GM12878 (cell line): ENCODE measurements at regions of chr2 and their contacts with region 1.

Region 1: DNA sequence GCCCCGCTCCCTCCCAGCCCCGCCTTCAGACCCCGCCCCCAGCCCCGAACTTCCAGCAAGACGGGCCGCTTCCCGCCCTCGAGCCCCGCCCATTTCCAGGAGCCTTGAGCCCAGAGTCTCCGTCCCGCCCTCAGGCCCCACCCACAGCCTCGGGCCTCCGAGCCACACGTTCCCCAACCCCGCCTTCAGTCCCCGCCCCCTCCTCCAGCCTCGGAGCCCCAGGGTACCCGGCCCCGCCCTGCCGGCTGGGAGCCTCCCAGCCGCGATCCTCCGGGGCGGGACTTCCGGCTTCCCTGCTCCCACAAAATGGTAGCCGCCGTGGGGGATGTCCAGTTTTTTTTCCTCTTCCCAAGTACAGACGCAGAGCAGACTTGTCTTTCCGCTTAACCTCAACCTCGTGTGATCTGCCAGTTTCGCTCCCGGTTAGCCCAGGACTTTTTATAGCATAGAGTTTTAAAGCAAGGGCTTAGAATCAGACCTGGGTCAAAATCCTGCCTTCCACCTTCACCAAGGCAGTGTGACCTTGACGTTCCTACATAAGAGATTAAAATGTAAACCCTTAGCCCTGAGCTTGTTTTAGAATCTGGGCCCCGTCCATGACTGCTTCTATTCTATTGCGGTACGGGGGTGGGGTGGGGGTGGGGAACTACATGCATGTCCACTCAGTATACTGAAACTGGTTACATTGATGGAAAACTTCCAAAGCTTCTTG is 435 bp upstream of the GPR155 start:
- DNase-seq: peak; percentile 85
- ATAC-seq: peak; percentile 96
- H3K4me3 ChIP-seq: peak overlapping the region; percentile 81
- H3K27ac ChIP-seq: peak overlapping the region; percentile 85
- H3K4me1 ChIP-seq: peaks cover 9% of the 10 kb centered on the region
- H3K27me3 ChIP-seq: no peaks in the 10 kb centered on the region
- CTCF ChIP-seq: no peak
- EP300 ChIP-seq: no peak
- POLR2A ChIP-seq: peak; percentile 55
- RAD21 ChIP-seq: no peak

Region 2: GRCh38 chr2:174023591-174024523 is 463.4 kb before region 1 on chr2:
- CTCF ChIA-PET with region 1: no interaction called
- POLR2A ChIA-PET with region 1: no interaction called
- RAD21 ChIA-PET with region 1: no interaction called
- SMC1A ChIA-PET with region 1: no interaction called
- in situ Hi-C with region 1: no loop called
- intact Hi-C with region 1: no loop called
- DNase-seq: no peak
- ATAC-seq: peak; percentile 72
- H3K4me3 ChIP-seq: no peak overlapping the region
- H3K27ac ChIP-seq: no peak overlapping the region
- H3K4me1 ChIP-seq: peaks cover 17% of the 10 kb centered on the region
- H3K27me3 ChIP-seq: no peaks in the 10 kb centered on the region
- CTCF ChIP-seq: no peak
- EP300 ChIP-seq: no peak
- POLR2A ChIP-seq: no peak
- RAD21 ChIP-seq: no peak

Region 3: GRCh38 chr2:174473796-174474195 is 13.5 kb before region 1 on chr2:
- CTCF ChIA-PET with region 1: interaction called, 6 read pairs
- POLR2A ChIA-PET with region 1: interaction called, 4 read pairs
- RAD21 ChIA-PET with region 1: interaction called, 4 read pairs
- SMC1A ChIA-PET with region 1: interaction called, 10 read pairs
- in situ Hi-C with region 1: no loop called
- intact Hi-C with region 1: no loop called
- DNase-seq: no peak
- ATAC-seq: no peak
- H3K4me3 ChIP-seq: no peak overlapping the region
- H3K27ac ChIP-seq: no peak overlapping the region
- H3K4me1 ChIP-seq: no peaks in the 10 kb centered on the region
- H3K27me3 ChIP-seq: no peaks in the 10 kb centered on the region; a peak in 1 of 4 replicates
- CTCF ChIP-seq: no peak
- EP300 ChIP-seq: no peak
- POLR2A ChIP-seq: no peak
- RAD21 ChIP-seq: no peak

Region 4: DNA sequence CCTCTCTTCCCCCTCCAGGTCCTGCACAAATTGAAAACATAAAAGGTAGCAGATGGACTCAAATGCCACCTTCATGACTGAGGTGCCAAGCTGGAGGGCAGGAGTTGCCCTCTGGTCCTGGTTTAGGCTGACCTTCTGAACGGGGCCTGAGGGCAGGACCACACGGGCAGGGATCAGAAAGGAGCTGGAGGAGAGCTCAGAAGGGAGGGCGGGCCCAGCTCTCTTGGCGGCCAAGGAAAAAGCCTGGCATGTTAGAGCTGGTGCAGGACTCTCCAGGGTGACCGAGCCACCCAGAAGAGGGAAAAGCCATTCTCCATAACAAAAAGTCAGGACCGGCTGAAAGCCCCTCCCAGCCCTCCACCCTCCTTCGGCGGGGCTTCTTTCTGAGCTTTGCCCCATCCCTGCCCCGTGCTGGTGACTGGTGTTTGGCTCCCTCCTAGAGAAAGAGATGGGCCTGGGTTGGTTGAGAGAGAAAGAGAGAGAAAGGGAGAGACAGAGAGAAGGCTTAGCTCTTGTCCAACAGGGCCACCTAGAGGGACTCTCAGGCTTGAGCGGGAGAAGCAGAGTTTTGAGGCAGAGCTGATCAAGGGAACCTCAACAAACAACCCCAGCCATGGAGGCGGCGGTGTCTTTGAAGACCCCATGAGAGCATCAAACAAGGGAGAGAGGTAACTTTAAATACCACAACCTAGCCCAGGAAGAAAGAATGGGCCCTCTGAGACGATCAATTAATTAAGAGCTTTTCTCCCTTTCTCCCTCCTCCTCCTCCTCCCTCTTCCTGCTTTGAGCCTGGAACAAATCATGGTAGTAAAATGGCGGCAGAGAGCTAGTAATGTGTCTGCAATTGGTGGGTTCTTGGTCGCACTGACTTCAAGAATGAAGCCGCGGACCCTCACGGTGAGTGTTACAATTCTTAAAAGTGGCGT is 59.6 kb after region 1 on chr2:
- CTCF ChIA-PET with region 1: interaction called, 8 read pairs
- POLR2A ChIA-PET with region 1: no interaction called
- RAD21 ChIA-PET with region 1: interaction called, 10 read pairs
- SMC1A ChIA-PET with region 1: interaction called, 5 read pairs
- in situ Hi-C with region 1: no loop called
- intact Hi-C with region 1: no loop called
- DNase-seq: no peak
- ATAC-seq: peak; percentile 85
- H3K4me3 ChIP-seq: no peak overlapping the region
- H3K27ac ChIP-seq: no peak overlapping the region
- H3K4me1 ChIP-seq: no peaks in the 10 kb centered on the region
- H3K27me3 ChIP-seq: no peaks in the 10 kb centered on the region
- CTCF ChIP-seq: peak; percentile 52 to 71 (median 55); a peak in 5 of 6 replicates
- EP300 ChIP-seq: no peak
- POLR2A ChIP-seq: no peak
- RAD21 ChIP-seq: peak; percentile 84